ENCODE measurements at regions of chr7 and their contacts with region 1.

Region 1: GRCh38 chr7:18559756-18560155 is 64.2 kb downstream of the HDAC9 start:
- DNase-seq: no peak
- H3K4me3 ChIP-seq: no peak overlapping the region
- H3K27ac ChIP-seq: no peak overlapping the region
- H3K4me1 ChIP-seq: no peaks in the 10 kb centered on the region
- H3K27me3 ChIP-seq: no peaks in the 10 kb centered on the region
- CTCF ChIP-seq: no peak
- POLR2A ChIP-seq: no peak

Region 2: GRCh38 chr7:18225067-18225466 is 334.7 kb before region 1 on chr7:
- intact Hi-C with region 1: no loop called
- DNase-seq: no peak
- H3K4me3 ChIP-seq: no peak overlapping the region
- H3K27ac ChIP-seq: no peak overlapping the region
- H3K4me1 ChIP-seq: no peaks in the 10 kb centered on the region
- H3K27me3 ChIP-seq: no peaks in the 10 kb centered on the region
- CTCF ChIP-seq: no peak
- POLR2A ChIP-seq: no peak

Region 3: GRCh38 chr7:18366394-18366793 is 193.4 kb before region 1 on chr7:
- intact Hi-C with region 1: loop called (anchors 5 kb)
- DNase-seq: no peak
- H3K4me3 ChIP-seq: no peak overlapping the region
- H3K27ac ChIP-seq: no peak overlapping the region
- H3K4me1 ChIP-seq: no peaks in the 10 kb centered on the region
- H3K27me3 ChIP-seq: no peaks in the 10 kb centered on the region
- CTCF ChIP-seq: no peak
- POLR2A ChIP-seq: no peak

Region 4: GRCh38 chr7:19713676-19714075 is 1153.9 kb after region 1 on chr7:
- intact Hi-C with region 1: no loop called
- DNase-seq: no peak
- H3K4me3 ChIP-seq: no peak overlapping the region
- H3K27ac ChIP-seq: no peak overlapping the region
- H3K4me1 ChIP-seq: peaks cover 7% of the 10 kb centered on the region
- H3K27me3 ChIP-seq: no peaks in the 10 kb centered on the region
- CTCF ChIP-seq: peak in 1 of 3 experiments; percentile 64
- POLR2A ChIP-seq: no peak

Measured in vagina (tissue), 2 donors.